ENCODE measurements at regions of chr9 and their contacts with region 1.

Region 1: DNA sequence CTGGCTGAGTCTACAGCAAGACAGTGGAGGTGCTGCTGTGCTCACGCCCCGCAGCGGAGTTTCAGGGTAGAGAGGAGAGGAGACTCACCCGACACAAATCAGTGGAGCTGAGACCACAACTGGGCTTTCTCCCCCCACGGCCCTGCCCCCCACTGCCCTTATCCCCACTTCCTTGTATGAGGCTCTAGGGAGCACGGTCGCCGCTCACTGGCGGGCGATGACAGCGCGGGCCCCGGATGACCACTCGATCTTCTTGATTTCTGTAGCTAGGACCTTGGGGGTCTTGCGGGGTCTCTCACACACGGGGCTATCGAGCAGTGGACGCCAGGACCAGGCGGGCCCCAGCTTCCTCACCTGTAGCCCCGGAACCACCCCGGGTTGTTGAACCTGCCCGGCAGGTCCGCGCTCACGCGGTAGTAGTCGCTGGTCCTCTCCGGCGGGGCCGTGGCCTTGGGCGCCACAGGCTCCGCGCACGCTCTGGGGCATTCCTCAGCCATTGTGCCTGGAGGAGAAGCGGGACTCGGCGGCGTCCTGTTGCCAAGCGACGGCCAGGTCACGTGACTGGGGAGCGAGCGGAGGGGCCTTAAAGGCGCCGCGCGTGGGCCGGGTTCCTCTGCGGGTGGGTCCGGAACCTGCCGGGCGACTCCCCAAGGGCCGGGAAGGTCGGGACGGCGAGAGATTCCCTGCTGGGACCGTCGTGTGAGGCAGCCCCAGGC is 969 bp upstream of the MRPS2 start:
- DNase-seq: peak; percentile 90
- H3K4me3 Mint-ChIP-seq: peak overlapping the region; percentile 83
- H3K27ac Mint-ChIP-seq: no peak overlapping the region
- H3K4me1 Mint-ChIP-seq: peaks cover 15% of the 10 kb centered on the region
- H3K27me3 Mint-ChIP-seq: peaks cover 14% of the 10 kb centered on the region

Region 2: DNA sequence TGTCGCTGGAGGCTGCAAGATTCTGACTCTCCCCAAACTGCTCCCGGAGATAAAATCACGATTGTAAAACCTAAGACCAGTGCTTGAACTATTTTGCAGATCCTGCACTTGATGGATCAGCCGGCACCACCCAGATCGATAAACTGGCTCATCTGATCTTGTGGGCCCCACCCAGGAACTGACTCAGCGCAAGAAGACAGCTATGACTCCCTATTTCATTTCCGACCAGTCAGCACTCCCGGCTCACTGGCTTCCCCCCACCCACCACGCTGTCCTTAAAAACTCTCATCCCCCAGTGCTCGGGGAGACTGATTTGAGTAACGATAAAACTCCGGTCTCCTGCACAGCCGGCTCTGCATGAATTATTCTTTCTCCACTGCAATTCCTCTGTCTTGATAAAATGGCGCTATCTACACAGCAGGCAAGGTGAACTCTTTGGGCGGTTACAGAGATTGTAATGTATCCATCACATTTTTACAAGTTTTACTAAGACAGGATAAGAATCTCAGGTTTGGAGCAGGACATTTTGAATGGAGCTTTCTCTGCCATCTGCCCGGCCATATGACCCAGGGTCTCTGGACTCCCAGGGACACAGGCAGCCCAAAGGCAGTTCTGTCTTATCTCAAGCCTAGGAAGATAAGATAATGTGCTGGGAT is 30.5 kb before region 1 on chr9:
- CTCF ChIA-PET with region 1: interaction called, 3 read pairs
- POLR2A ChIA-PET with region 1: no interaction called
- intact Hi-C with region 1: loop called (anchors 1 kb)
- DNase-seq: peak; percentile 89
- H3K4me3 Mint-ChIP-seq: peak overlapping the region; percentile 47
- H3K27ac Mint-ChIP-seq: no peak overlapping the region
- H3K4me1 Mint-ChIP-seq: peaks cover 22% of the 10 kb centered on the region
- H3K27me3 Mint-ChIP-seq: peaks cover 16% of the 10 kb centered on the region

Region 3: GRCh38 chr9:136171081-136172029 is 671.8 kb after region 1 on chr9:
- CTCF ChIA-PET with region 1: no interaction called
- POLR2A ChIA-PET with region 1: no interaction called
- intact Hi-C with region 1: no loop called
- DNase-seq: no peak
- H3K4me3 Mint-ChIP-seq: no peak overlapping the region
- H3K27ac Mint-ChIP-seq: no peak overlapping the region
- H3K4me1 Mint-ChIP-seq: no peaks in the 10 kb centered on the region
- H3K27me3 Mint-ChIP-seq: peaks cover 17% of the 10 kb centered on the region

Measured in activated CD4-positive, alpha-beta memory T cell treated with anti-CD3 and anti-CD28 coated beads for 36 hours (primary cell).